K562 (cell line): ENCODE measurements at regions of chr12 and their contacts with region 1.

Region 1: DNA sequence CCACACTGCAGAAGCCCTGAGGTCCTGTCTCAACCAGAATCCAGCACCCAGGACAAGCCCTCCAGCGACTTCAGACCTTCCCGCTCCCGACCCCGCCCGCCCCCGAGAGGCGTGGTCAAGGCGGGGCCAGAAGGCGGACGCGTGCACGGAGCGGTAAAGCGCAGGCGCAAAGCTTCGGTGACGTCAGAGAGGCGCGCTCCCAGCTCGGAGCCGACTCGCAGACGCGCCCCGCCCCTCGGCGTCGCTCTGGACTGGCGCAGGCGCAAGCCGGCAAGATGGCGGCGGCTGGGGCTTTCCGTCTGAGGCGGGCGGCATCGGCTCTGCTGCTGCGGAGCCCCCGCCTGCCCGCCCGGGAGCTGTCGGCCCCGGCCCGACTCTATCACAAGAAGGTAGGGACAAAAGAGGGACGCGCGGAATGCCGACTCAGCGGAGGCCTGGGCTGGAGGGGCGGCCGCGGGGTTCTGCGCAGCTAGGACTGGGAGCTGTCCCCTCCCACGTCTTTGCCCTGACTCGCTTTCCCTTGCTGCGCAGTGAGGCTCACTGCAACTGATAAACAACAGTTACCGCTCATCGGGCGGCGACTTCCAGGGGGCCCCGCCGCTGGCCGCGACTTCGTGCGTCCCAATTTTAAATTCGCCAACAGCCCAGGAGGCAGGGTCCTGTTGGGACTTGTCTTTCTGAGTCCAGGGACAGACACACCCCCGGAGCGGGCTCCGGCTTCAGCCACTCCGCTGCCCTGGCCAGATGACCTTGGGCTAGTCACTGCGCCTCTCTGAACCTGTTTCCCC is at the start of gene ISCU:
- DNase-seq: peak; percentile 96 to 99 (median 98)
- ATAC-seq: peak; percentile 85
- H3K4me3 ChIP-seq: peak within 1 kb of the TSS; percentile 93
- H3K27ac ChIP-seq: peak within 1 kb of the TSS; percentile 97
- H3K4me1 ChIP-seq: peaks cover 8 to 26% of the 10 kb centered on the region in 2 experiments
- H3K27me3 ChIP-seq: no peaks in the 10 kb centered on the region
- CTCF ChIP-seq: 0 out of 6 replicates have a peak, but pooled peaks of 1 of the 3 experiments have one; percentile 5
- EP300 ChIP-seq: no peak
- POLR2A ChIP-seq: peak; percentile 87
- RAD21 ChIP-seq: no peak
- polyA plus RNA-seq, gene ISCU: 15.9 to 19.8 TPM

Region 2: GRCh38 chr12:108548954-108549521 is 13.5 kb before region 1 on chr12:
- CTCF ChIA-PET with region 1: no interaction called
- POLR2A ChIA-PET with region 1: interaction called, 18 read pairs
- in situ Hi-C with region 1: no loop called
- intact Hi-C with region 1: no loop called
- DNase-seq: no peak
- ATAC-seq: no peak
- H3K4me3 ChIP-seq: no peak overlapping the region
- H3K27ac ChIP-seq: no peak overlapping the region
- H3K4me1 ChIP-seq: 0 out of 5 replicates have a peak, but pooled peaks cover 0 to 2% of the 10 kb centered on the region in 2 experiments
- H3K27me3 ChIP-seq: no peaks in the 10 kb centered on the region
- CTCF ChIP-seq: no peak
- EP300 ChIP-seq: no peak
- POLR2A ChIP-seq: no peak
- RAD21 ChIP-seq: no peak

Region 3: DNA sequence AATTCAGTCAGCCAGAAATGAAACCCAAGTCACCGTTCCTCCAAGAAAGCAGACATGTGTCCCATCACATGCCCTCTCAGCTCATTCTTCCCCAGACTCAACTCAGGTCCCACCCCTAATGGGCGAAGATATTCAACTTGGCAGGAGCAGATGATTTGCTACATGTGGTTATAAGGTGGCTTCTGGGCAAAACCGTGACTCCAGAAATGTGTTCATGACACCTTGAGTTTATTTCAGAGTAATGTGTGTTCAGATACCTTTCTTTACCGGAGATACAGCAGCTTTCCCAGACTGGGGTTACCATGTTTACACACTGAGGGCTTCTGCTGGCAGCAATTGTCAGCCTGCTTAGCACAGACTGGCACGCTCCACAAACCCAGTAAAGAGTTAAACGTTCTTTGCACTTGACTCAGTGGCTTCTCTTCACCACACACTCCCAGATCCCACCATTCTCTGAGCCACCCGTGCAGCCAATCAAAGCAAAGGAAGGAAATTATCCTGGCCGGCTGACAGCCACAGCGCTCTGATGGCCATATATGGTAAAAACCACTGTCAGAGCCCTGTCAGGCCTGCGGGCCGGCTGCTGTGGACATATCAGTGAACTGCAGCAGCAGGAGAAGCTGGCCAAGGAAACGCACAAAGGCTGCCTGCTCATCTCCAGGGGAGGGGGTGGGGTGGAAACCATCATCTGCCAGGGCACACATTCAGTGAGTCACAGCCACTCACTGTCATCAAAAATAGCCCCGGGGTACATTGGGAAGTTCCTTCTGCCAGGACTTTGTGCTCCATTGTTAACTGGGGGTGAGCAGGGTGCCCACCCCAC is 128.8 kb after region 1 on chr12:
- CTCF ChIA-PET with region 1: no interaction called
- POLR2A ChIA-PET with region 1: interaction called, 4 read pairs
- in situ Hi-C with region 1: no loop called
- intact Hi-C with region 1: loop called (anchors 2 kb)
- DNase-seq: peak; percentile 80 to 98 (median 85)
- ATAC-seq: peak; percentile 89
- H3K4me3 ChIP-seq: peak overlapping the region; percentile 15; the same call in 1 of the 2 replicates
- H3K27ac ChIP-seq: peak overlapping the region; percentile 99
- H3K4me1 ChIP-seq: peaks cover 47 to 83% of the 10 kb centered on the region in 2 experiments
- H3K27me3 ChIP-seq: no peaks in the 10 kb centered on the region
- CTCF ChIP-seq: peak; percentile 33 to 55 (median 51); a peak in 4 of 6 replicates
- EP300 ChIP-seq: peak; percentile 96
- POLR2A ChIP-seq: peak; percentile 83
- RAD21 ChIP-seq: peak in 1 of 2 experiments; percentile 36; a peak in 1 of 4 replicates

Region 4: GRCh38 chr12:108750526-108751402 is 188.2 kb after region 1 on chr12:
- CTCF ChIA-PET with region 1: no interaction called
- POLR2A ChIA-PET with region 1: no interaction called
- in situ Hi-C with region 1: no loop called
- intact Hi-C with region 1: no loop called
- DNase-seq: no peak
- ATAC-seq: no peak
- H3K4me3 ChIP-seq: no peak overlapping the region
- H3K27ac ChIP-seq: no peak overlapping the region
- H3K4me1 ChIP-seq: no peaks in the 10 kb centered on the region
- H3K27me3 ChIP-seq: no peaks in the 10 kb centered on the region
- CTCF ChIP-seq: no peak
- EP300 ChIP-seq: no peak
- POLR2A ChIP-seq: no peak
- RAD21 ChIP-seq: no peak

Region 5: DNA sequence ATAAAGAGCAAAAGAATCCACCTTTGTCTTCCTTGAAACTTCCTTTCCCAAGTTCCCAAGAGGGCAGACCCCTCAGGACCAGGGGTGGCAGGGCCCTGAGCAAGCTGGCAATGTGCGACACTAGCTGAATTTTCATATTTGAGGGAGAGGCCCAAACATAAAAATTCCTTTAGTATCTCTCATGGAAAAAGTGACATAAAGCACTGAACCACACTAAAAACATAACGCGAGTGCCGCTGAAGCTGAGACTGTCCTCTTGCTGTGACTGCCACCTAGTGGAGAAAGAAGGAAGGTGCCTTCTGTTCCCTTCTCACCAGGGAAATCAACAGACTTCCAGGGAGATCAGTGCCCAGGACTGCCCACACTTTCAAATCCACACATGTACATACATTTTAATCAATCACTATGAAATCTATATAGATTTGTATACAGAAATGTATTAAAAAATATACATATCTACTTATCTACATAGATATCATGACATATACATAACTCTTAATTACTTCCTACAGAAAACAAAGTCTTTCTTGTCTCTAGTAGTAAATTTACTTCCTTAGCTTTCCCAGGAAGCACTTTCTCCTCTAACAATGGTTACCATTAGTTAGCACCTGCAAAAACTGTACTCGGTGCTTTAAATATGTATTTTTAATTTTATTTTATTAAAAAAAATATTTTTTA is 241.0 kb after region 1 on chr12:
- CTCF ChIA-PET with region 1: interaction called, 17 read pairs
- POLR2A ChIA-PET with region 1: no interaction called
- in situ Hi-C with region 1: loop called (anchors 5 kb)
- intact Hi-C with region 1: loop called (anchors 1 kb)
- DNase-seq: peak; percentile 82 to 87 (median 83)
- ATAC-seq: peak; percentile 96
- H3K4me3 ChIP-seq: no peak overlapping the region
- H3K27ac ChIP-seq: no peak overlapping the region
- H3K4me1 ChIP-seq: peaks cover 2 to 3% of the 10 kb centered on the region in 2 experiments; a peak in 3 of 5 replicates
- H3K27me3 ChIP-seq: no peaks in the 10 kb centered on the region
- CTCF ChIP-seq: peak; percentile 86 to 96 (median 86)
- EP300 ChIP-seq: no peak
- POLR2A ChIP-seq: no peak
- RAD21 ChIP-seq: peak; percentile 97 to 98

Region 6: GRCh38 chr12:108950991-108951739 is 388.6 kb after region 1 on chr12:
- CTCF ChIA-PET with region 1: interaction called, 5 read pairs
- POLR2A ChIA-PET with region 1: no interaction called
- in situ Hi-C with region 1: no loop called
- intact Hi-C with region 1: loop called (anchors 5 kb)
- DNase-seq: peak; percentile 48 to 79 (median 68)
- ATAC-seq: peak; percentile 93
- H3K4me3 ChIP-seq: no peak overlapping the region
- H3K27ac ChIP-seq: no peak overlapping the region
- H3K4me1 ChIP-seq: no peaks in the 10 kb centered on the region; a peak in 1 of 5 replicates
- H3K27me3 ChIP-seq: peaks cover 4 to 21% of the 10 kb centered on the region in 2 experiments; a peak in 4 of 5 replicates
- CTCF ChIP-seq: peak; percentile 80 to 88 (median 86)
- EP300 ChIP-seq: no peak
- POLR2A ChIP-seq: no peak
- RAD21 ChIP-seq: peak; percentile 76 to 86